ENCODE measurements at regions of chr2 and their contacts with region 1.

Region 1: GRCh38 chr2:187581125-187581896 is 27.1 kb upstream of the TFPI start:
- DNase-seq: no peak
- H3K4me3 ChIP-seq: 0 out of 2 replicates have a peak overlapping the region, but pooled peaks have one; percentile 8
- H3K27me3 ChIP-seq: no peaks in the 10 kb centered on the region
- CTCF ChIP-seq: peak; percentile 67

Region 2: DNA sequence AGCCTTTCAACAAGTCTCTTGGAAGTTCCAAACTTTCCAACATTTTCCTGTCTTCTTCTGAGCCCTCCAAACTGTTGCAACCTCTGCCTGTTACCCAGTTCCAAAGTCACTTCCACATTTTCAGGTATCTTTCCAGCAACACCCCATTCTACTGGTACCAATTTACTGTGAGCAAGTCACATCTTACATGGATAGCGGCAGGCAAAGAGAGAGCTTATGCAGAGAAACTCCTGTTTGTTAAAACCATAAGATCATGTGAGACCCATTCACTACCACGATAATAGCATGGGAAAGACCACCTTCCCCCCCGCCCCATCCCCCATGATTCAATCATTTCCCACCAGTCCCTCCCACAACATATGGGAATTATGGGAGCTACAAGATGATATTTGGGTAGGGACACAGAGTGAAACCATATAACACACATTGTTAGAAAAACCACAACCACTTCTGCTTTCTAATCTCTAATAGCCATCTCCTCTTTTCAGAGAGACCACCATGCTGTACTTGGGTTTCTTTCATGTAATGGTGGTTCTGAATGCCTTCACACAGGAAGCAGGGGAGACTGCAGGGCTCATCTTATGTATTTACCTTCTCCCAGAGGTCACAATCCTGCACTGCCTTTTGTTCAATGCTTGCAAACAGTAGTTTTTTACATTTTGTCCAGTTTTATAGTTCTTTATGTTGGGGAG is 87.3 kb before region 1 on chr2:
- CTCF ChIA-PET with region 1: interaction called, 275 read pairs
- POLR2A ChIA-PET with region 1: no interaction called
- DNase-seq: no peak
- H3K4me3 ChIP-seq: no peak overlapping the region
- H3K27me3 ChIP-seq: no peaks in the 10 kb centered on the region
- CTCF ChIP-seq: no peak

Region 3: GRCh38 chr2:187519419-187520120 is 61.7 kb before region 1 on chr2:
- CTCF ChIA-PET with region 1: interaction called, 10 read pairs
- POLR2A ChIA-PET with region 1: no interaction called
- DNase-seq: no peak
- H3K4me3 ChIP-seq: no peak overlapping the region
- H3K27me3 ChIP-seq: no peaks in the 10 kb centered on the region
- CTCF ChIP-seq: no peak

Region 4: DNA sequence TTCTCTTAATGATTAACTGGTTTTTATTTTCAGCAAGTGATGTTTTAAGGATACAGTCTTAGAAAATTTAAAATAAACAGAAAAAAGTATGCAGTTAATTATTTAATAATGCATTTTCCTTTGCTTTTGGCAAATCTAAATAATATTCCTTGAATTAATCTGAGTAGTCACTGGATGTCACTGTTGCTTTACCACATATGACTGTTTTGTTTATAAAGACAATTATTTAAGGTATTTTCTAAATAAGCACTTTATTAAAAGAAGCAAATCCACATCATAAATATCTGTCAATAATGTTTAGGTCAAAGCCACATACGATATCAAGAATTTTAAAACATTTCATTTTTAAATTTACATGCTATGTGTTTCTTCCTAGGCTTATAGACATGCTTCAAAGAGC is 13.5 kb after region 1 on chr2:
- CTCF ChIA-PET with region 1: interaction called, 31 read pairs
- POLR2A ChIA-PET with region 1: no interaction called
- DNase-seq: no peak
- H3K4me3 ChIP-seq: no peak overlapping the region
- H3K27me3 ChIP-seq: no peaks in the 10 kb centered on the region
- CTCF ChIP-seq: no peak

Region 5: GRCh38 chr2:188512456-188512855 is 931.1 kb after region 1 on chr2:
- CTCF ChIA-PET with region 1: interaction called, 11 read pairs
- POLR2A ChIA-PET with region 1: no interaction called
- DNase-seq: no peak
- H3K4me3 ChIP-seq: no peak overlapping the region
- H3K27me3 ChIP-seq: no peaks in the 10 kb centered on the region
- CTCF ChIP-seq: peak; percentile 54